Transverse colon (tissue), 4 donors: ENCODE measurements at regions of chr17 and their contacts with region 1.

Region 1: GRCh38 chr17:19264716-19265115 is 27.6 kb downstream of the EPN2 start:
- DNase-seq: no peak
- H3K4me3 ChIP-seq: no peak overlapping the region
- H3K27ac ChIP-seq: peak overlapping the region; percentile 63 to 80 (median 74)
- H3K4me1 ChIP-seq: peaks cover 31 to 76% (median 47%) of the 10 kb centered on the region in 4 donors
- H3K27me3 ChIP-seq: no peaks in the 10 kb centered on the region
- CTCF ChIP-seq: no peak
- EP300 ChIP-seq: no peak
- POLR2A ChIP-seq: no peak

Region 2: DNA sequence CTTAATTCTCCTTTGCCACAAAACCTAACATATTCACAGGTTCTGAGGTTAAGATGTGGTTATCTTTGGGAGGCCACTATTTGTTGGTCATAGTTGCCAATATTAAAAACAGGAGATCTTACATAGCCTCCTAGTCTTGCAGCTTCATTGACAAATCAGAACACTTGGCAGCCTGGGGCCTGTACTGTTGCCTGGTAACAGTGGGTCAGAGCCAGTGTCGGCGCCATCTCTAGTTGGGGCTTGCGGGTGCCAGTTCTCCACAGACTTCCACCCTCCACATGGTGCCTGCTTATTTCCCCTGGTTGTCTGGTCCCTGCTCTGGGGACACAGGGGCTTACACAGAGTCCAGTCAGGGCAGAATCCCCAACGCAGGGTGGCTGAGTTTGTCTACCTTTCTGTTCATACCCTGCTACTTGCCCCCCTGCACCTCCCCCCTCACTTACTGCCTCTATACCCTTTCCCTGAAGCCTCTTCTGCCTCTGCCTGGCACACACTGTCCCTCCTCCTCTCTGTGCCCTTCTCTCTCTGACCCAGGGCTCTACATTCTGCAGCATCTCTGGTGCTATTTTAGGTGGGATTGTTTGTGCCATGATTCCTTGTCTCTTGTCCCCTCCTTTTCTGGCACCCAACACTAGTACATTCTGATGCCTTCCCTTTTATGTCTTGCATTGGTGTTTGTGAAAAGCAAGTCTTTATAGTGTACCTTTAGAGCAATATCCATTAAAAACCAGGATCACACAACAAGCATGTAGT is 14.1 kb before region 1 on chr17:
- in situ Hi-C with region 1: no loop called
- intact Hi-C with region 1: loop called (anchors 1 kb)
- DNase-seq: no peak
- H3K4me3 ChIP-seq: no peak overlapping the region
- H3K27ac ChIP-seq: peak overlapping the region; percentile 64 to 80 (median 68)
- H3K4me1 ChIP-seq: peaks cover 45 to 52% (median 47%) of the 10 kb centered on the region in 4 donors
- H3K27me3 ChIP-seq: no peaks in the 10 kb centered on the region
- CTCF ChIP-seq: no peak
- EP300 ChIP-seq: no peak
- POLR2A ChIP-seq: no peak